ENCODE measurements at regions of chr4 and their contacts with region 1.

Region 1: GRCh38 chr4:47876784-47877546 is 37.4 kb downstream of the NFXL1 start:
- DNase-seq: no peak
- H3K4me3 ChIP-seq: no peak overlapping the region
- H3K27ac ChIP-seq: no peak overlapping the region
- H3K4me1 ChIP-seq: no peaks in the 10 kb centered on the region
- H3K27me3 ChIP-seq: no peaks in the 10 kb centered on the region
- CTCF ChIP-seq: no peak

Region 2: GRCh38 chr4:47862297-47862696 is 14.7 kb before region 1 on chr4:
- CTCF ChIA-PET with region 1: no interaction called
- dilution Hi-C with region 1: no loop called
- in situ Hi-C with region 1: no loop called
- intact Hi-C with region 1: loop called (anchors 2 kb)
- DNase-seq: no peak
- H3K4me3 ChIP-seq: no peak overlapping the region
- H3K27ac ChIP-seq: no peak overlapping the region
- H3K4me1 ChIP-seq: no peaks in the 10 kb centered on the region
- H3K27me3 ChIP-seq: no peaks in the 10 kb centered on the region
- CTCF ChIP-seq: no peak

Region 3: DNA sequence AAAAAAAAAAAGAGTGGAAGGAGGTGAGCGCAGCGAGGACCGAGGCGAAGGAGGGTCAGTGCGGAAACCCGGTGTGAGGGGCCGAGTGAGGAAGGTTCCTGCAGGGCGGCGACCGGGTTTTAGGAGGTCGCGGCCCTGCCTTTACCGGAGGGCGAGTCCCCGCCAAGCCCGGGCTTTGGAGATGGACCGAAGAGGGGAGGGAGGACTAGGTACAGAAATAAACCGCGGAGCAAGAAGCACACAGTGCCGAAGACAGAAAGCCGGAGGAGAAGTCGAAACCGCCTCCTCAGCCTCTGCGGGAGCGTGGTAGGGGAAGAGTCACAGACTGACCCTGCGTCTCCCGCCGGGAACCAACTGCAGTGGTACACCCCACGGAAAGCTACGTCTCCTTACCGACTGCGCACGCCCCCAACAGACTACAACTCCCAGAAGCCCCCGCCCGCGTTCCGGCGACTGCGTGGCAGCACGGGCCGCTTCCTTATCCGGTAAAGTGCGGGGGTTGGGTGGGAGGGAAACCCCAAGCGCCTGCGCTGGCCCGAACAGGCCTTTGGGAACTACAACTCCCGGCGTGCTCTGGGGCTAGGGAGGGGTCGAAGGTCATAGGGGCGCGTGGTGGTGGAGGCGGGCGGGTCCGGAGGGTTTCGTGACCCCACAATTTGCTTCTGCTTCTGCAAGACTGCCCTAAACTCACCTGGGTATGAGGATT is 37.4 kb after region 1 on chr4 and contains the start of gene NFXL1:
- CTCF ChIA-PET with region 1: no interaction called
- dilution Hi-C with region 1: no loop called
- in situ Hi-C with region 1: no loop called
- intact Hi-C with region 1: loop called (anchors 5 kb)
- DNase-seq: peak; percentile 96
- H3K4me3 ChIP-seq: peak within 1 kb of the TSS; percentile 80 to 90 (median 88)
- H3K27ac ChIP-seq: peak within 1 kb of the TSS; percentile 77
- H3K4me1 ChIP-seq: peaks cover 13% of the 10 kb centered on the region
- H3K27me3 ChIP-seq: no peaks in the 10 kb centered on the region
- CTCF ChIP-seq: no peak
- total RNA-seq, gene NFXL1: 15.8 to 20.9 TPM